B cell (primary cell): ENCODE measurements at regions of chr3 and their contacts with region 1.

Region 1: GRCh38 chr3:71317749-71318457 is 265.6 kb downstream of the FOXP1 start:
- DNase-seq: no peak
- ATAC-seq: no peak
- H3K4me3 ChIP-seq: no peak overlapping the region
- H3K4me3 Mint-ChIP-seq: peak overlapping the region; percentile 52
- H3K27ac ChIP-seq: peak overlapping the region in 1 of 2 donors; percentile 51
- H3K27ac Mint-ChIP-seq: no peak overlapping the region
- H3K4me1 ChIP-seq: peaks cover 37 to 45% of the 10 kb centered on the region in 2 donors
- H3K4me1 Mint-ChIP-seq: peaks cover 36% of the 10 kb centered on the region
- H3K27me3 ChIP-seq: no peaks in the 10 kb centered on the region
- H3K27me3 Mint-ChIP-seq: no peaks in the 10 kb centered on the region
- CTCF ChIP-seq: no peak

Region 2: DNA sequence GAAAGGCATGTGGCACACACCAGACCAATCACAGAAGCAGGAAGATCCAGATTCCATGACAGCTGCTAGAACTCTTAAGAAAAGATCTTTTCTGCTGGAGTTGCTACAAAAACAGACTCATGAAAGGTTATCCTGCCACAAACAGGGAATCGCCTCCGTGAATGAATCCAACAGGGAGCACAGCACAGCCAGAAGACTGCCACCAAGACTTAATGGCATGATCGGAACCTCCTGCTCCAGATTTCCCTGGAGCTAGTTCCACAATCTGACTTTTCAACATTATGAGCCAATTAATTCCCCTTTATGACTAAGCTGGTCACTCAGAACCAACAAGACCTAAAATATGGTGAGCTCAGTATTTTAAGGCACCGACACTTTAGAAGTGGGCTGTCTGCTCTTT is 33.1 kb after region 1 on chr3:
- CTCF ChIA-PET with region 1: no interaction called
- POLR2A ChIA-PET with region 1: interaction called, 7 read pairs
- intact Hi-C with region 1: loop called (anchors 5 kb)
- DNase-seq: no peak
- ATAC-seq: no peak
- H3K4me3 ChIP-seq: no peak overlapping the region
- H3K4me3 Mint-ChIP-seq: no peak overlapping the region
- H3K27ac ChIP-seq: peak overlapping the region in 1 of 2 donors; percentile 37
- H3K27ac Mint-ChIP-seq: peak overlapping the region; percentile 76
- H3K4me1 ChIP-seq: peaks cover 32 to 36% of the 10 kb centered on the region in 2 donors
- H3K4me1 Mint-ChIP-seq: peaks cover 63% of the 10 kb centered on the region
- H3K27me3 ChIP-seq: no peaks in the 10 kb centered on the region
- H3K27me3 Mint-ChIP-seq: no peaks in the 10 kb centered on the region
- CTCF ChIP-seq: no peak